HepG2 (cell line): ENCODE measurements at regions of chr21 and their contacts with region 1.

Region 1: DNA sequence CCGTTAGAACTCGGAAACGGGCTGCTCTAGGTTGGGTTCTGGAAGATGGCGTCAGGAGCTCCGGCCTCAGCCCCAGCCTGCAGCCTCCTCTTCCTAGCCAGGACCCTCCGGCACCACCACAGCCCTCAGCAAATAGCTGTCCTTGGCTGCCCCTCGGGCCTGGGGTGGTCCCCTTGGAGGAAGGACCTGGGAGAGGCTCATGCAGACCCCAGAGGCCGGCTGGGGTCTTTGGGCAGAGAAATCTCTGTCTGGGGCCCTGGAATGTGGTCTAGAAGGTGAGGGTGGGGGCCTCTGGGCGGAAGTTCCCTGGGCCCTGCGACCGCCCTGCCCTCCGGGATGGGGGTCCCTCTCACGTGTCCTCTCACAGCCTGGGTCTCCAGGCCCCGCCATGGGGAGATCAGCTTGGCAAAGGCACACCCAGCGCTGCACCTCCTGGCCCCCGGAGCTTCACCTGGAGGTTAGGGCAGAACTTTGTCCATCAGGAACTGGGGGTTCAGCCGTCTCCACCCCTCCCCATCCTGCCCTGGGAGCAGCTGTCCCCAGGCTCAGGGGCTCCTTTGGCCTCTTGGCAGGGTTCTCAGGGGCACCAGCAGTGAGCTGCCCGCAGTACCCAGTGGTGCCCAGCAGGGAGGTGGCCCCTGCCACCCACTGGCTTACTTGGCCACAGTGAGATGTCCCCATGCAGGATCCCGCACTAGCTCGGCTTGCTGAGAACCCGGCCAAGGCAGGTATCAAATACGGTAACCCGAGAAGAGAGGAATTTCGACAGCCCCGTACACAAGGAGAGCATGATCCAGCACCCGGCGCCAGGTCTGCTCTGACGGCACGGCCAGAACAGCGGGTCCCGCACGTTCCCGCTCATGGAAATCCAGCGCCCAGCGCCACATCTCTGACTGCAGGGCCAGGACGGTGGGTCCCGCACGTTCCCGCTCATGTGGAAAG is 36.6 kb downstream of the RRP1 start:
- DNase-seq: peak; percentile 33
- ATAC-seq: peak; percentile 82
- H3K4me3 ChIP-seq: peak overlapping the region; percentile 31 to 64 (median 33)
- H3K27ac ChIP-seq: no peak overlapping the region
- H3K4me1 ChIP-seq: peaks cover 32% of the 10 kb centered on the region
- H3K27me3 ChIP-seq: peaks cover 15 to 35% of the 10 kb centered on the region in 2 experiments
- CTCF ChIP-seq: no peak
- EP300 ChIP-seq: no peak
- POLR2A ChIP-seq: no peak
- RAD21 ChIP-seq: no peak

Region 2: DNA sequence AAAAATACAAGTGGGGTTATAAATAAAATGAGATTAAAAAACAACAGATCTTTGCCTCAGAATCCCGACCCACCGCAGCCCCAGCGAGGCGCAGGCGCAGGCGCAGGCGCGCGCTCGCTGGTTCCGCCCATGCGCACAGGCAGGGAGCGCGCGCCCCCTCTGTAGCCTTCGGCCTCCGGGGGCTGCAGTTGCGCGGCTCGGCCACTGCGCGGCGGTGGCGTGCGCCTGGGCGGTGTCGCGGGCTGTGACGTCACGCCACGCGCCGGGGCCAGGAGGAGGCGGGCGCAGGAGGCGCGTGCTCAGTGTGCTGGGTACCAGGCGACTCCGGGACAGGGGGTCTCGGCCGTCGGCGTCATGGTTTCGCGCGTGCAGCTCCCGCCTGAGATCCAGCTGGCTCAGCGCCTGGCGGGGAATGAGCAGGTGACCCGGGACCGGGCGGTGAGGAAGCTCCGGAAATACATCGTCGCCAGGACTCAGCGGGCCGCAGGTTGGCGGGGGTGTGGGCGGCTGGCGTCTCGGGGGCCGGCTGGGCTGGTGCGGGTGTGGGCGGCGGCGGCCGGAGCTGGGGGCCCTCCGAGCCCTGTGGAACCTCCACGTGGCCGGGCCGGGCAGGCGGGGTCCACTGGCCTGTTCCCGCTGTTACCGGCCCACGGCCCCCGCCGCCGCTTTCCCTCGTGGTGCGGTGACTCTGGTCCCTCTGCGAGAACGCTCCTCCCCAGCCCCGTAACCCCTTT is 36.5 kb before region 1 on chr21 and contains the start of gene RRP1:
- CTCF ChIA-PET with region 1: no interaction called
- POLR2A ChIA-PET with region 1: no interaction called
- in situ Hi-C with region 1: no loop called
- intact Hi-C with region 1: no loop called
- DNase-seq: peak; percentile 74
- ATAC-seq: peak; percentile 88
- H3K4me3 ChIP-seq: peak within 1 kb of the TSS; percentile 75 to 95 (median 86)
- H3K27ac ChIP-seq: peak within 1 kb of the TSS; percentile 71
- H3K4me1 ChIP-seq: peaks cover 16% of the 10 kb centered on the region
- H3K27me3 ChIP-seq: no peaks in the 10 kb centered on the region; a peak in 1 of 5 replicates
- CTCF ChIP-seq: peak; percentile 90
- EP300 ChIP-seq: 0 out of 4 replicates have a peak, but pooled peaks of 1 of the 2 experiments have one; percentile 6
- POLR2A ChIP-seq: peak in 1 of 2 experiments; percentile 77; a peak in 2 of 4 replicates
- RAD21 ChIP-seq: peak; percentile 73
- total RNA-seq, gene RRP1: 24.6 and 35.1 TPM in 2 replicates

Region 3: GRCh38 chr21:43803558-43804300 is 22.2 kb before region 1 on chr21:
- CTCF ChIA-PET with region 1: no interaction called
- POLR2A ChIA-PET with region 1: no interaction called
- in situ Hi-C with region 1: no loop called
- intact Hi-C with region 1: no loop called
- DNase-seq: no peak
- ATAC-seq: no peak
- H3K4me3 ChIP-seq: no peak overlapping the region
- H3K27ac ChIP-seq: no peak overlapping the region
- H3K4me1 ChIP-seq: no peaks in the 10 kb centered on the region
- H3K27me3 ChIP-seq: no peaks in the 10 kb centered on the region
- CTCF ChIP-seq: no peak
- EP300 ChIP-seq: no peak
- POLR2A ChIP-seq: no peak
- RAD21 ChIP-seq: no peak

Region 4: GRCh38 chr21:43893536-43894205 is 67.7 kb after region 1 on chr21:
- CTCF ChIA-PET with region 1: no interaction called
- POLR2A ChIA-PET with region 1: no interaction called
- in situ Hi-C with region 1: loop called (anchors 10 kb)
- intact Hi-C with region 1: no loop called
- DNase-seq: no peak
- ATAC-seq: no peak
- H3K4me3 ChIP-seq: no peak overlapping the region
- H3K27ac ChIP-seq: no peak overlapping the region
- H3K4me1 ChIP-seq: peaks cover 12% of the 10 kb centered on the region
- H3K27me3 ChIP-seq: no peaks in the 10 kb centered on the region
- CTCF ChIP-seq: no peak
- EP300 ChIP-seq: no peak
- POLR2A ChIP-seq: no peak
- RAD21 ChIP-seq: no peak

Region 5: DNA sequence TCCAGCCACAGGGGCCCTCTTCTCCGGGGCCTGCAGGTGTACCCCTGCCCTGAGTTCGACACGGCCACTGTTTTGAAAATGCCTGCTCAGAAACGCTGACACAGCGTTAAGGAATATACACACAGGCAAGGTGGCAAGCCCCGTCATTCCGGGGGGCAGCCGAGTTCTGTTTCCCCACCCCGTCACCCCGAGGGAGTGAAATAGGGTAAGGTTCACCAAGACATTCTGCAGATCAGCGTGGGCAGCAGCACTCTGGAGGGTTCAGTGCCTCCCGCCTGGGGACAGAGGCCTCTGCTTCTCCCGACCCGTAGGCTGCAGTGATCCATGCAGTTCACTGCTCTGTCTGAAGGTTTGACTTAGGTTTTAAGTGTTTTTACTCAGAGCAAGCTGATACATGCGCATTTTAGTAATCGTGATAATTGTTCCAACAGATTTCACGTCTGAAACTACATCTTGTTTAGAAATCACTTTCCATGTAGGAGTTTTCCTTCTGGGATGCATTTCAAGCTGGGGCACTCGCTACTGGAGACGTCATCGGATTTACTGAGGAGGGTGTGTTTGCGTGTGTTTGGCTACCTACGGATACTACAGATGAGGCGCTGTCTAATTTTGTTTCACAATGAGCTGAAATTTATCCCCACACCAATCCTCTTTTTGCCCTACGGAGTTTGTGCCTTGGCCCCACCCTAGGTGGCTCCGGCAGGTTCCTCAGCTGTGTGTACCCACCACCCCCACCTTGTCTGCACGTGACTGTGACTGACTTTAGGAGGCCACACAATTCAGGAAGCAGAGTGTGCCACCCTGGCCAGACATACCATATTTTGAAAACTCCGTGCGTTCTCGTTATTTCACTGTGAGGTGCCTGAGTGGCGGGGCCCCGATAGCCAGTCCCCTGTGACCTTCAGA is 102.5 kb after region 1 on chr21:
- CTCF ChIA-PET with region 1: no interaction called
- POLR2A ChIA-PET with region 1: no interaction called
- in situ Hi-C with region 1: no loop called
- intact Hi-C with region 1: no loop called
- DNase-seq: no peak
- ATAC-seq: no peak
- H3K4me3 ChIP-seq: no peak overlapping the region
- H3K27ac ChIP-seq: no peak overlapping the region
- H3K4me1 ChIP-seq: peaks cover 21% of the 10 kb centered on the region
- H3K27me3 ChIP-seq: no peaks in the 10 kb centered on the region
- CTCF ChIP-seq: no peak
- EP300 ChIP-seq: no peak
- POLR2A ChIP-seq: no peak
- RAD21 ChIP-seq: no peak

Region 6: DNA sequence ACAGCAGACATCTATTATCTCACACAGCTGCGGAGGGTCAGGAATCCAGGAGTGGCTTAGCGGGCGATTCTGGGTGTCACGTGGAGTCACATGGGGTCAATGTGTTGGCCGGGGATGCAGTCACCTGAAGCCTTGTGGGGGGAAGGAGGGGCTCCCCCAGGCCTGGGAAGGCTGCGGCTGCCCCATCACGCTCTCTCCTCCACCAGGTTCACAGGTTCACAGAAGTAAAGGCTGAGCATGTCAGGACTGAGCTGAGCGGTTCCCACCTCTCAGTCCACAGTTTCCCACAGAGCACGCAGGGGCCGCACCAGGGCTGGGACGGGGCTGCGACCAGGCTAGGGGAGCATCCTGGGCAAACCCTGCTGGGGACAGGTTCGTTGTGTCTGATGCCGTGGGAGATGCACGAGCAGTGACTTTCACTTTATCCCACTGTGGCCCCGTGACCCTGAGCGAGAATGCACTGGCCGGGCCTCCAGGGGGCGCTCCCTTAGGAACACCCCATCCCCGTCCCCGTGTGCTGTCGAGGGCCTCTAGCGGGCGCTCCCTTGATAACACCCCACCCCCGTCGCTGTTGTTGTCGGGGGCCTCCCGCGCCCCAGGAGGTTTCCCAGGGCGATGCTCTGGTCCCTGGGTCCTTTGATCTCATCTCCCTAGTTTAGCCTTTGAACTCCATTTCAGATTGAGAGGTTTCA is 112.9 kb after region 1 on chr21:
- CTCF ChIA-PET with region 1: no interaction called
- POLR2A ChIA-PET with region 1: no interaction called
- in situ Hi-C with region 1: no loop called
- intact Hi-C with region 1: loop called (anchors 2 kb)
- DNase-seq: peak; percentile 81
- ATAC-seq: peak; percentile 89
- H3K4me3 ChIP-seq: peak overlapping the region; percentile 65 to 76 (median 69)
- H3K27ac ChIP-seq: peak overlapping the region; percentile 75
- H3K4me1 ChIP-seq: peaks cover 54% of the 10 kb centered on the region
- H3K27me3 ChIP-seq: no peaks in the 10 kb centered on the region
- CTCF ChIP-seq: peak; percentile 98
- EP300 ChIP-seq: peak in 1 of 2 experiments; percentile 22; a peak in 1 of 4 replicates
- POLR2A ChIP-seq: no peak; a peak in 1 of 4 replicates
- RAD21 ChIP-seq: peak; percentile 96